Mammary epithelial cell (primary cell): ENCODE measurements at regions of chr7 and their contacts with region 1.

Region 1: DNA sequence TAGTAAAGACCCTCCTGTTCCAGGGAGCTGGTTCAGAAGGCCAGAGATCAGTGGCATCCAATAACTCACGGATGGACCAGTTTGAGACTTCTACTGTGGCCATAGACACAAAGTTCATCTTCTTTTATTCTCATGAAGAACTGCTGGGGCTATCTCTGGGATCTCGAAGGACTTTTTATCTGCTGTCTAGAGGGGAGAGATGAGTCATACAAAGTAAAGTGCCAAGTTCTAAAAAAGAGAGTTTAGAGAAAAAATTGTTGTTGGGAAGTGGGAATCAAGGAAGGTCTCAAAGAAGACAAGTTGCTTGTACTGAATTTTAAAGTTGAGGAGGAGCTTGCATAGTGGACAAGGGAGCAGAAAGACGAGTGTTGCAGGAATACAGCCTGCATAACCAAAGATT is 8.0 kb upstream of the FAM221A start:
- DNase-seq: no peak
- H3K4me3 ChIP-seq: no peak overlapping the region
- H3K27ac ChIP-seq: no peak overlapping the region
- H3K4me1 ChIP-seq: no peaks in the 10 kb centered on the region
- H3K27me3 ChIP-seq: no peaks in the 10 kb centered on the region
- CTCF ChIP-seq: no peak

Region 2: GRCh38 chr7:24199978-24200377 is 527.9 kb after region 1 on chr7:
- CTCF ChIA-PET with region 1: no interaction called
- dilution Hi-C with region 1: no loop called
- in situ Hi-C with region 1: no loop called
- intact Hi-C with region 1: no loop called
- DNase-seq: no peak
- H3K4me3 ChIP-seq: no peak overlapping the region
- H3K27ac ChIP-seq: no peak overlapping the region
- H3K4me1 ChIP-seq: no peaks in the 10 kb centered on the region
- H3K27me3 ChIP-seq: no peaks in the 10 kb centered on the region
- CTCF ChIP-seq: no peak

Region 3: GRCh38 chr7:24653316-24654085 is 981.5 kb after region 1 on chr7:
- CTCF ChIA-PET with region 1: interaction called, 10 read pairs
- dilution Hi-C with region 1: no loop called
- in situ Hi-C with region 1: no loop called
- intact Hi-C with region 1: no loop called
- DNase-seq: peak; percentile 42
- H3K4me3 ChIP-seq: peak overlapping the region; percentile 8 to 48 (median 47)
- H3K27ac ChIP-seq: peak overlapping the region; percentile 32
- H3K4me1 ChIP-seq: peaks cover 7% of the 10 kb centered on the region
- H3K27me3 ChIP-seq: no peaks in the 10 kb centered on the region
- CTCF ChIP-seq: no peak